ENCODE measurements at regions of chr11 and their contacts with region 1.

Region 1: DNA sequence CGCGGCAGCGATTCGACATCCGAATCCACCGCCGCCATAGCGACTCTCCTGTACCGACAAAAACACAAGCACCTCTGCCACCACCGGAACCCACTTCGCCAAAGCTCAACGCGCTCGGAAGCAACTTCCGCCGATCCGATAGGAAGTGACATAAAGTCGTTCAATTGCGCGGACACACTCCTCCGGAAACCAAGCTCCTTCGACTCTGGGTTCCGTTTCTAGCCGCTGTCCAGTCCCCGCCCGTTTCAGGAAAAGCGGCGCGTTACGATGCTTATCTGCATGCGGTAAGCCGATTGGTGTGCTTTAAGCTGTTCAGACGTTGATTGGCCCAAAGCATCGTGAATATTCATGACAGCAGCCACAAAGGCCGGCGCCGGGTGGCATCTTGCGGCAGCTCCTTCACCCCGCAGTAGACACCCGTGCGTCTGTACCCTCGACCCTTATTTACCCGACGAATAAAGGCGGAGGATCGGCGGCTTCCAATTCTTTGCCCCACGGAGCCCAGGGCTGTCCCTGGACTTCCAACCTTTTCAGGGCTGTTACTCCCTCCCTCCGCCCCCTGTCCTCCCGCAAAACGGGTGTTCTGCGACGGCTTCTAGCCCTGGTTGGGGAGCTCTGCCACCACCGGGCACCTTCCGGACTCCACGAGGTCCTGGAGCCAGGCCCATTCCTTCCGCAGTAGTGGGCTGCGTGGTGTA is at the start of gene TUT1:
- DNase-seq: peak; percentile 100
- H3K4me3 ChIP-seq: peak within 1 kb of the TSS; percentile 67
- H3K27ac ChIP-seq: peak within 1 kb of the TSS; percentile 80
- H3K4me1 ChIP-seq: peaks cover 17% of the 10 kb centered on the region
- H3K27me3 ChIP-seq: no peaks in the 10 kb centered on the region
- CTCF ChIP-seq: no peak
- total RNA-seq, gene TUT1: 27.3 and 27.6 TPM in 2 replicates

Region 2: DNA sequence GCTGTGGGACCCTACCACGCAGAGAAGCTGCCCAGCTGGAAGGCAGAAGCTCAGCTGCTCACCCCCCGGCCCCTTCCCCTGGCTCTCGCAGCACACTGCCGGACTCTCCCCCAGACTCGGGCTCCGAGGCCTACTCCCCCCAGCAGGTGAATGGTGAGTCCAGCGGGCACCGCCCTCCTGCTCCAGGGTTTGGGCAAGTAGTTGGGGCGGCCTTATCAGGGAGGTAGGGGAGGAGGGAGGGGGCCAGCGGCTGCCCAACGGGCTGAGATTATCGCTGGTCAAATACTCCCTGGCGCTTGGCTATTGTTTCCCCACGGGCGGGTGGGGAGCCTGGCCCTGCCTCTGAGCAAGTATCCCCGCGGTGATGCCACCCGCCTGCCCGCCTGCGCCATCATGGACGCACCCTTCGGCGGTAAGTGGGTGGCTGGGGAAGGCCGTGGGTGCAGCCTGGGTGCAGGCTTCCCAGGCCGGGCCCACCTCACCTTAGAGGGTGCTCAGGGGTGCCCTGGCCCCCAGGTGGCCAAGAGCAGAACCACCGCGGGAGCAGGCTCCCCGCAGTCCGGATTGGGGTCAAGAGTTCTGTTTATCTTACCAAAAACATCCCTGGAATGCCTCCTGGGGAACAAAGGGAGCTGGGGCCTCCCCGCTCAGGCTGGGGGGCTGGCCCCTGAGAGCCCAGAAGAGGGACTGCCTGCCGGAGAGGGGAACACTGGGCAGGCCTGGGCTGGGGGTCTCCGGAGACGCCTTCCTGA is 822.3 kb before region 1 on chr11:
- CTCF ChIA-PET with region 1: no interaction called
- POLR2A ChIA-PET with region 1: no interaction called
- intact Hi-C with region 1: no loop called
- DNase-seq: no peak
- H3K4me3 ChIP-seq: no peak overlapping the region
- H3K27ac ChIP-seq: no peak overlapping the region
- H3K4me1 ChIP-seq: no peaks in the 10 kb centered on the region
- H3K27me3 ChIP-seq: no peaks in the 10 kb centered on the region
- CTCF ChIP-seq: 0 out of 2 replicates have a peak, but pooled peaks have one; percentile 7

Region 3: DNA sequence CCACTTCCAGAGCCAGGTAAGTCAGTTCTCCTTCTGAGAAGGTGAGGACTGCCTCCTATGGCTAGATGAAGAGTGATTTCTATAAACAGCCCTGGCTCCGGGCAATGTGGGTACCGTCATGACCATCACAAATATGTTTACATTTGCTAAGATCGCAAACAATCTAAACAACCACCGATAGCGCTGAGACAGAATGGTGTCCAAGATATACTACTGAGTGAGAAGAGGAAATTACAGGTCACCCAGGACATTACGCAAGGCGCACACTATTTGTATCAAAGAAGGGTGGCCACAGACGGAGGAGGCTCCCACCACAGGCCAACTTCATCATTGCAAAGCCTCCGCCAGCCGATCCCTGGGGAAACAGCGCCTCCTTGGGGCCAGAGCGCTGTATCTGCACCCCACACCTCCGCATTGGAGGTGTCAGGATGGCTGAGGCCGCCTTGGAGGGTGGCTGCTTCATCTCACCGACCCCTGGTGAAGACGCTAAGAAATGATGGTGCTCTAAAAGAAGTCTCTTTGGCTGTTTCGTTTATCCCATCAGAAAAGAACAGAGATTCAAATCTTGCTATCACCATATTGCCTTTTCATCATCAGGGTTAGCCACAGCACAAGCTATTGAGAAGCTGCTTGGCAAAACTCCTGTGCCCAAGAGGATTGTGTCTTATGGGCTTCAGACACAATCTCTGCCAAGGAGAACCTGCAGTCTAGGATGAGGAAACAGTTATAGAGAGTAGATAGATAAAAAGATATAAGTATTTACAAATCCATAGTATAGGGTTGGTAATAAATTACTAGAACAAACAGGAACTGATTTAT is 266.6 kb before region 1 on chr11:
- CTCF ChIA-PET with region 1: no interaction called
- POLR2A ChIA-PET with region 1: no interaction called
- intact Hi-C with region 1: no loop called
- DNase-seq: peak; percentile 73
- H3K4me3 ChIP-seq: no peak overlapping the region
- H3K27ac ChIP-seq: no peak overlapping the region
- H3K4me1 ChIP-seq: no peaks in the 10 kb centered on the region
- H3K27me3 ChIP-seq: no peaks in the 10 kb centered on the region
- CTCF ChIP-seq: peak; percentile 83

Region 4: GRCh38 chr11:62427630-62428233 is 163.9 kb before region 1 on chr11:
- CTCF ChIA-PET with region 1: interaction called, 13 read pairs
- POLR2A ChIA-PET with region 1: no interaction called
- intact Hi-C with region 1: no loop called
- DNase-seq: no peak
- H3K4me3 ChIP-seq: no peak overlapping the region
- H3K27ac ChIP-seq: no peak overlapping the region
- H3K4me1 ChIP-seq: no peaks in the 10 kb centered on the region
- H3K27me3 ChIP-seq: no peaks in the 10 kb centered on the region
- CTCF ChIP-seq: no peak

Region 5: DNA sequence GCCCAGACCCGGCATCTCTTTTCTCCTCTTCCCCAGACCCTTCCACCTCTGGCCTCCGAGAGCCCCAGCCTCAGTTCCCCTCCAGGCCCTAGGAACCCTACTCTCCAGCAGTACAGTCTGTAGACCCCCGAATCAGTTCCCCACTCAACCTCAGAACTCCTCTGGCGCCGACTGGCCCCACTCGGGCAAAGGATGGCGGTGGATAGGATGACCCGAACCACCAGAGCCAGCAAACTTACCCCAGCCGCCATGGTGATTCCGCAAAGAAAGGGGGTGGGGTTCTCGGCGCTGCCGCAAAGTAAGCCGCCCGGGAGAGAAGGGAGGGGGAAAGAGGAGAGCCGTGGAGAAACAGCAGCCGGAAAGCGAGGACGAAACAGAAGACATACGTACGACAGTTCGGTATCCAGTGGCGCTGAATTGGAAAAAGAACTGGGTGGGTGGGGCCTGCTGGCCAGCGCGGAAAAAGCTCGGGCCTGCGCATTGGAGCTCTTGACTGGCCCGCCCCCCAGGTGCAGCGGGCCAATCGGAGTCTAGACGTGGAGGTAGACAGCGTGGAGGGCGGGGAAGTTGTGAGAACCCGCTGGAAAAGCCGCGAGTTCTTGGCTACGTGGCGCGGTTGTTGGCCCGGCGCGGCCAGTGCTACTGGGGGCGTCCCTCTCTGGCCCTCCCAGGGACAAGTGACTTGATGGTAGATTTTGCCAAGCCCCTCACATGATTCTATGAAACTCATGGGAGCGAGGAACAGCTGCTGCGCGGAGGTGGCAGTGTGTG is 17.8 kb before region 1 on chr11 and contains the start of gene EEF1G:
- CTCF ChIA-PET with region 1: interaction called, 9 read pairs
- POLR2A ChIA-PET with region 1: interaction called, 14 read pairs
- intact Hi-C with region 1: no loop called
- DNase-seq: peak; percentile 100
- H3K4me3 ChIP-seq: peak within 1 kb of the TSS; percentile 65
- H3K27ac ChIP-seq: peak within 1 kb of the TSS; percentile 88
- H3K4me1 ChIP-seq: peaks cover 31% of the 10 kb centered on the region
- H3K27me3 ChIP-seq: no peaks in the 10 kb centered on the region
- CTCF ChIP-seq: no peak
- total RNA-seq, gene EEF1G: 1,804 and 1,817 TPM in 2 replicates

Region 6: DNA sequence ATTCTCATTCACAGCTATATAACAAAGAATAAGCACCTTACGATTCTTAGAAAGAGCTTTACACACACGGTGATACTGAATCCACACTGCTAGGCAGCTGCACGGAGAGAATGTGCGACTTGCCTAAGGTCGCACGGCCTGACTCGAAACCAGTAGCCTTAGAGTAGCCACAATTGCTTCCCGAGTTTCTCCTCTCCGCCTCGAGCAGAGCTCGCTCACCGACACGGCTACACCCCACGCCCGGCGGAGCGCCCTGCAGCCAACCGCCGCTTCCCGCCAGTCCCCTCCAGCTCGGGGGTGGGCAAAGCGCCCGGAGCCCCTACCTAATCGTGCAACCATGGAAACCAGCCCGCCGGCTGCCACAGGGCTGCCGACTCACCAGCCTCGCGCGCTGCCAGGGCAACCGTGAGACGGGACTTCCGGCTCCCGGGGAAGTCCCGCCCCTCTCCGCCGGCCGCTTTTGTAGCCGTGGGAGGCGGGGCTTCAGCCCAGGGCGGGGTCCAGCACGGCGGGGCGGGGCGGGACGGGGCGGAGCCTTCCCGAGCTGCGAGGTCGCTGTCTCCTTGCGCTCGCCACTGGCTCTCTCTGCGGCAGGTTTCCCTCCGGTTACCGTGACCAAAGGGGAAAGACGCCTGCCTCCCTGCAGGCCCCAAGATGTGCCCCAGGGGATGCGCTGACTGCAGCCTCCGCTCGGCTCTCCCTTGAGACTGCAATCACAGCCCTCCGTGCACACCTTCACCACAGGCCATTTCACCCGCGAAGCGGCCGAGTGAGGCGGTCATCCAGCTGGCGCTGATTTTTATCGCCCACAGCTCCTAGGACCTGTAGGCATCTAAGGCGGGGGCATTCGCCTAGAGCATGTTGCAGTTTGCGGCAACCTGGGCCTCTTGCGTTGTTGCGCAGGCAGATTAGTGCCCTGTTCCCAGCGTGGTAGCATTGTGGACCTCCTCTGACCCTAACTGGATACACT is 114.6 kb after region 1 on chr11:
- CTCF ChIA-PET with region 1: no interaction called
- POLR2A ChIA-PET with region 1: no interaction called
- intact Hi-C with region 1: loop called (anchors 5 kb)
- DNase-seq: peak; percentile 99
- H3K4me3 ChIP-seq: peak overlapping the region; percentile 65
- H3K27ac ChIP-seq: peak overlapping the region; percentile 75
- H3K4me1 ChIP-seq: peaks cover 38% of the 10 kb centered on the region
- H3K27me3 ChIP-seq: no peaks in the 10 kb centered on the region
- CTCF ChIP-seq: no peak

Region 7: DNA sequence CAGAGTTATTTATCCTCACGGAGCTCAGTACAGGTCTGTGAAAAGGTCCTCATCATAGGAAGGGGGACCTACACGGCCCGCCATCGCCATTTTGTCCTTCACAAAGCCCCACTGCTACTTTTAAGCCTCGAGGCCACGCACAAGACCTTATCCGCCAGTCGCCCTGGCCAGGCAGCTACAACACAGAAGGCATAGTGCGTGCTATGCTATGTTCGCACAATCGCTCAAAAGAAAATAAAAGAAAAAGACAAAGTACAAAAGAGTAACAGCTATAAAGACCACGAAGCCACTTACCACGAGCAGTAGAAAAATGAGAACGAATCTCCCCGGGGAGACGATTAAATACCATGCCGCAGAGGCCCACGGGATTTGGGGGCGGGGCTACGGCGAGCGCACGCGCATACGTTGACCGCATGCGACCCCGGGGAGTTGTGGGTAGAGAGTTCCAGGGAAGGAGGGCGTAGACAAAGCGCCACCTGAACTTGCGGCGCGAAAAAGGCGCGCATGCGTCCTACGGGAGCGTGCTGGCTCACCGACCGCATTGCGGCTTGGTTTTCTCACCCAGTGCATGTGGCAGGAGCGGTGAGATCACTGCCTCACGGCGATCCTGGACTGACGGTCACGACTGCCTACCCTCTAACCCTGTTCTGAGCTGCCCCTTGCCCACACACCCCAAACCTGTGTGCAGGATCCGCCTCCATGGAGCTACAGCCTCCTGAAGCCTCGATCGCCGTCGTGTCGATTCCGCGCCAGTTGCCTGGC is 264.2 kb after region 1 on chr11:
- CTCF ChIA-PET with region 1: no interaction called
- POLR2A ChIA-PET with region 1: no interaction called
- intact Hi-C with region 1: loop called (anchors 10 kb)
- DNase-seq: peak; percentile 99
- H3K4me3 ChIP-seq: peak overlapping the region; percentile 70
- H3K27ac ChIP-seq: peak overlapping the region; percentile 92
- H3K4me1 ChIP-seq: peaks cover 13% of the 10 kb centered on the region
- H3K27me3 ChIP-seq: no peaks in the 10 kb centered on the region
- CTCF ChIP-seq: no peak